Activated CD4-positive, alpha-beta T cell treated with anti-CD3 and anti-CD28 coated beads, Interleukin-2, amount 10 ng/mL, durations not matched to agents 24 days and 14 days (primary cell): ENCODE measurements at regions of chr9 and their contacts with region 1.

Region 1: DNA sequence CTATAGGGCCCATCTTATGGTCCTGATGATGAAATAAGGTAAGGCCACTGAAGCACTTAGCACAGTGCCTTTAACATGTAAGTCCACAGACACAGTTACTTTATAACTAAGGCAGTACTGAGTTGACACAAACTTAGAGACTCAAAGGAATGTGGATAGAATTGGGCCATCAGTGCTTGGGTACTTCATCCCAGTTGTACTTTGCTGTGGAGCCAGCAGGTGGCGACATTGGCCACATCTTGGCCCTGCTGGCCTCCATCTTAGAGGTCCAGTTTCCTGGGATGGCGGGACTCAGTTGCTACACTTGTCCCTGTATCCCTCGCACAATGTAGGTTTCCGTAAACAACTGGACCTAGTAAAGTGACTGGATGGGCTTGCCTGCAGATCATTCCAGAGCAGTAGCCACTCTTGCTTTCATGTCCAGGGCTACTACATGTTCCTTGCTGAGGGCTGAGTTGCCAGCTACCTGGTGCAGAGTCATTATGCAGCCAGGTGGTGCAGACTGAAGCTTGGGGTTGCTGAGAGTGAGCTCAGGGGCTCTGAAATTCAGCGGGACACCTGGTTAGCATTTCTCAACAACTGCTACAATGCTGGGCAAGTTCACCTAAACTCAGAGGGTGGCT is 10.6 kb downstream of the MTAP start:
- DNase-seq: peak; percentile 90
- H3K4me3 Mint-ChIP-seq: no peak overlapping the region
- H3K27ac Mint-ChIP-seq: no peak overlapping the region
- H3K4me1 Mint-ChIP-seq: peaks cover 25% of the 10 kb centered on the region
- H3K27me3 Mint-ChIP-seq: no peaks in the 10 kb centered on the region

Region 2: GRCh38 chr9:21919377-21920362 is 106.6 kb after region 1 on chr9:
- intact Hi-C with region 1: loop called (anchors 1 kb)
- DNase-seq: peak; percentile 82
- H3K4me3 Mint-ChIP-seq: peak overlapping the region; percentile 53
- H3K27ac Mint-ChIP-seq: peak overlapping the region; percentile 68
- H3K4me1 Mint-ChIP-seq: peaks cover 21% of the 10 kb centered on the region
- H3K27me3 Mint-ChIP-seq: no peaks in the 10 kb centered on the region

Region 3: GRCh38 chr9:21995177-21996086 is 182.4 kb after region 1 on chr9:
- intact Hi-C with region 1: loop called (anchors 1 kb)
- DNase-seq: peak; percentile 95
- H3K4me3 Mint-ChIP-seq: peak overlapping the region; percentile 88
- H3K27ac Mint-ChIP-seq: peak overlapping the region; percentile 95
- H3K4me1 Mint-ChIP-seq: peaks cover 29% of the 10 kb centered on the region
- H3K27me3 Mint-ChIP-seq: peaks cover 51% of the 10 kb centered on the region

Region 4: DNA sequence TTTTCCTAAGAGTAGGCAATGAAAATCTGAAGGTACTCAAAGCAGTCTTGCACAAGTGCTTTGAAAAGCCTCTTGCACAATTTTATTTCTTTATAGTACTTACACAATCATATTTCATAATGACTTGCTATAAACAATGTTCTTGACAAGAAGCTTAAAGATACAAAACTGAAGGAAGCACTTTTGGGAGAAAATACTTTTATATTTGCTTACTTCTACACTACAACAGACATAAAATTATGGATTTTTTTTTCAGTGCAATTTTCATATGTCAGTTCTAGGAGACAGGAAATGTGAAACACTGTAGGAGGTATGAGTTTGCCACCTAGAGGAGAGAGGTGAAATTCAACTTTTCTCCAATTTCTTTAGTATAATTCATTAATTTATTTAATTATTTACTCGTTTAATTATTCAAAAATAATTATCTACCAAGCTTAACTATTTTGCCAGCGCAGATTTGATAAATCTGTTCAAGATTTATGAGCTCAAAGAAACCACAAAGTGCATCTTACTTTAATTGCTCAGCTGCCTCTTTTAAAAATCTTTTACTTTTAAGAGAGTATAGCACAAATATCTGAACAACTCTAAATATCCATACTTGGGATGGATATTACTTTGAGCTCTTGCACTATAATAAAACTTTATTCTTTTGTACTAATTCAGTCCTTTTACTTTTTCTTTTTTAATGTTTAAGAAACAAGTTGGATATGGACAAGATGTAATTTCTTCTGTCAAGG is 225.1 kb after region 1 on chr9:
- intact Hi-C with region 1: loop called (anchors 1 kb)
- DNase-seq: no peak
- H3K4me3 Mint-ChIP-seq: no peak overlapping the region
- H3K27ac Mint-ChIP-seq: no peak overlapping the region
- H3K4me1 Mint-ChIP-seq: peaks cover 26% of the 10 kb centered on the region
- H3K27me3 Mint-ChIP-seq: peaks cover 34% of the 10 kb centered on the region

Region 5: GRCh38 chr9:22147813-22148524 is 334.9 kb after region 1 on chr9:
- intact Hi-C with region 1: loop called (anchors 2 kb)
- DNase-seq: peak; percentile 75
- H3K4me3 Mint-ChIP-seq: no peak overlapping the region
- H3K27ac Mint-ChIP-seq: no peak overlapping the region
- H3K4me1 Mint-ChIP-seq: peaks cover 22% of the 10 kb centered on the region
- H3K27me3 Mint-ChIP-seq: peaks cover 37% of the 10 kb centered on the region

Region 6: DNA sequence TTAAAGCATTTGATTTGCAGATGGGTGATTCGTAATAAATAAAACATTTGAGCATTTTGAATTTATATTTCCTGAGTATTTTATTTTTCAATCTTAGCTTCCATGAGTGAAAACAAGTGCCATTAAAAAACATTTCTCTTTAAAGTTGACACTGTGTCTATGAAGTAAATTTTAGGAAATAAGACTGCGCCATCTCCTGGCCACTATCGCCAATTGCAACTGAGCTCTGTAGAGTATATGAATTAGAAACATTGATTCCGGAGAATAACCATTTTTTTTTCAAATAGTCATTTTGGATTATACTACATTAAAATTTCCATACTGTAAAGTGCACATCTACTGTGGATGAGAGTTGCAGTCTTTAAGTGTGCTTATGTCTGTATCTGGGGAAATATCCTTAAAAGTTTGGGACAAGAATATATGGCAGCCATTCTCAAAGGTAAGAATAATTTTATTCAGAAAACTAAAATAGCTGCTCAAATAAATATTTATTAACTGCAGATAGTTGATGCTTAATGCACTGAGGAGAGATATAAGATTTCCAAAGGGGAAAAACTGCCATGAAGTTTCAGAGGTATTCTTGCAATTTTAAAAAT is 639.5 kb after region 1 on chr9:
- intact Hi-C with region 1: loop called (anchors 1 kb)
- DNase-seq: peak; percentile 79
- H3K4me3 Mint-ChIP-seq: no peak overlapping the region
- H3K27ac Mint-ChIP-seq: no peak overlapping the region
- H3K4me1 Mint-ChIP-seq: no peaks in the 10 kb centered on the region
- H3K27me3 Mint-ChIP-seq: peaks cover 25% of the 10 kb centered on the region